ENCODE measurements at regions of chr3 and their contacts with region 1.

Region 1: DNA sequence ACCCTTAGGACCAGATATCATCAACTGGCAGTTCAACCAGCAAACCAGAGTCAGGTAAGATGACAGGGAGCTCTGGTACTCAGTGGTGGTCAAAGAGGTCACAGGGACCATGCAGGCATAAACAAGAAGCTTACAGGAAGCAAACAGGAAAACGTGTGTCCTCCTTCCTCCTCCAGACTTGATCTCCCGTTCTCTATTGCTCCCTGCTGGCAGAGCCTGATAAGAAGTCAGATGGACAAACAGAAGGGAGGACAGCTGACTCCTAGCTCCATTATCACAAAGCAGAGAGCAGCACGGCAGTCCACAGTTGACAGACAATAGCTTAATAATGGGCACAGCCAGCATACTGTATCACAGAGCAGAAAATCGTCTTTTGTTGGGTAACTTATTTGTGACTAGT is 156.5 kb upstream of the SLC2A2 start:
- DNase-seq: peak in 1 of 6 donors; percentile 13
- ATAC-seq: peak in 3 of 4 donors; percentile 62 to 70 (median 68)
- H3K4me3 ChIP-seq: no peak overlapping the region
- H3K27ac ChIP-seq: no peak overlapping the region
- H3K4me1 ChIP-seq: peaks cover 6 to 13% (median 8%) of the 10 kb centered on the region in 3 donors
- H3K27me3 ChIP-seq: no peaks in the 10 kb centered on the region
- CTCF ChIP-seq: peak in 1 of 4 donors; percentile 10

Region 2: DNA sequence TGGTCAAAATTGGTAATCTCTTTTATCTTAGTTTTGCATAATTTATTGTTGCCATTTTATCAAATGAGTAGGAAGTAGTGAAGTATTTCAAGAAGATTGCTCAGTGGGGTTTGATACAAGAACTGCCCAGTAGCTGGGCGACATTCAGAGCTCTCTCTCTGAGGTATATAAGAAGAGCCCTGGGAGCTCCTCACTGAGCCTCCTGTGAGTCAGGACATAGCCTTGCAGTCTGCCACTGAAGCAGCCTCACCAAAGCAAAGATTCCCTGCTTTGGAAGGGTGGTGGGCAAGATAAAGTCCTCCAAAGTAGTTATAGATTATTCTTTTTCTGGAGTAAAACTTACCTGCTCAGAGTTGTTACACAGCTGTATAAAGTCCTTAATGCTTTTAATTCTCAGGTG is 799.5 kb before region 1 on chr3:
- intact Hi-C with region 1: no loop called
- DNase-seq: no peak
- ATAC-seq: no peak
- H3K4me3 ChIP-seq: no peak overlapping the region
- H3K27ac ChIP-seq: no peak overlapping the region
- H3K4me1 ChIP-seq: no peaks in the 10 kb centered on the region
- H3K27me3 ChIP-seq: no peaks in the 10 kb centered on the region
- CTCF ChIP-seq: no peak

Region 3: GRCh38 chr3:171561596-171562323 is 378.7 kb after region 1 on chr3:
- intact Hi-C with region 1: loop called in 1 of 3 experiments (anchors 5 kb)
- DNase-seq: no peak
- ATAC-seq: no peak
- H3K4me3 ChIP-seq: no peak overlapping the region
- H3K27ac ChIP-seq: no peak overlapping the region
- H3K4me1 ChIP-seq: no peaks in the 10 kb centered on the region
- H3K27me3 ChIP-seq: no peaks in the 10 kb centered on the region
- CTCF ChIP-seq: no peak